Activated T-helper 2 cell treated with anti-CD3 and anti-CD28 coated beads, Interferon-gamma antibody, Interleukin-2, Interleukin-4, amounts not matched to agents 10 μg/mL and 5 μg/mL and 100 μg/mL, durations not matched to agents 14 hours and 24 hours and 36 hours (primary cell): ENCODE measurements at regions of chr4 and their contacts with region 1.

Region 1: GRCh38 chr4:185005216-185005819 is 13.0 kb upstream of the HELT start:
- DNase-seq: peak; percentile 68
- H3K4me3 Mint-ChIP-seq: peak overlapping the region; percentile 42
- H3K27ac Mint-ChIP-seq: no peak overlapping the region
- H3K4me1 Mint-ChIP-seq: peaks cover 4% of the 10 kb centered on the region
- H3K27me3 Mint-ChIP-seq: peaks cover 45% of the 10 kb centered on the region

Region 2: GRCh38 chr4:184745831-184746795 is 259.2 kb before region 1 on chr4:
- intact Hi-C with region 1: loop called (anchors 5 kb)
- DNase-seq: peak; percentile 56
- H3K4me3 Mint-ChIP-seq: no peak overlapping the region
- H3K27ac Mint-ChIP-seq: no peak overlapping the region
- H3K4me1 Mint-ChIP-seq: peaks cover 11% of the 10 kb centered on the region
- H3K27me3 Mint-ChIP-seq: no peaks in the 10 kb centered on the region

Region 3: GRCh38 chr4:185020293-185020808 is 15.0 kb after region 1 on chr4:
- intact Hi-C with region 1: loop called (anchors 2 kb)
- DNase-seq: no peak
- H3K4me3 Mint-ChIP-seq: no peak overlapping the region
- H3K27ac Mint-ChIP-seq: no peak overlapping the region
- H3K4me1 Mint-ChIP-seq: peaks cover 2% of the 10 kb centered on the region
- H3K27me3 Mint-ChIP-seq: peaks cover 82% of the 10 kb centered on the region

Region 4: DNA sequence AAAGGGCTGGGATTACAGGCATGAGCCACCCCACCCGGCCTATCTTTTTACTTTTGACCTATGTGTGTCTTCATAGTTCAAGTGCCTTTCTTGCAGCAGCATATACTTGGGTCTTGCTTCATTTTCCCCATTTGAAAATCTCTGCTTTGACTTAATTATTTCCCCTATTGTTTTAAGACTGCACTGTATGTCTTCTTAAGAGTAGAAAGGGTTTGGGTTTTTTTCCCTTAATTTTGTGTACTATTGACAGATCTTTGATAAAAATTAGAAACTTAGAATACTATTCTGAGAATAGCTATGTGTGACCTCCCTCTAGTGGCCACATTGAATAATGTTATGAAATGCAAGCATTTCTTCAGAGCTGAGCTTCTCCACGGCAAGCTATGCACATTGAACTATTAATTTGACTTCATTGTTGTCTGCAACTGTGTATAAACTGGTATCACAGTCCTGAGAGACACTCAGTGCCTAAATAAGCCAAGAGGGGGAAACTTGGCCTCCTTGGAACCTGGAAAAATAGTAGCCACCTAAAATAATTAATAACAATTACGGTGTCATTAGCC is 129.1 kb after region 1 on chr4:
- intact Hi-C with region 1: loop called (anchors 10 kb)
- DNase-seq: no peak
- H3K4me3 Mint-ChIP-seq: no peak overlapping the region
- H3K27ac Mint-ChIP-seq: no peak overlapping the region
- H3K4me1 Mint-ChIP-seq: no peaks in the 10 kb centered on the region
- H3K27me3 Mint-ChIP-seq: peaks cover 41% of the 10 kb centered on the region

Region 5: GRCh38 chr4:185183619-185184281 is 178.4 kb after region 1 on chr4:
- intact Hi-C with region 1: loop called (anchors 1 kb)
- DNase-seq: peak; percentile 49
- H3K4me3 Mint-ChIP-seq: no peak overlapping the region
- H3K27ac Mint-ChIP-seq: no peak overlapping the region
- H3K4me1 Mint-ChIP-seq: peaks cover 14% of the 10 kb centered on the region
- H3K27me3 Mint-ChIP-seq: no peaks in the 10 kb centered on the region